RWPE1 (cell line): ENCODE measurements at regions of chr6 and their contacts with region 1.

Region 1: DNA sequence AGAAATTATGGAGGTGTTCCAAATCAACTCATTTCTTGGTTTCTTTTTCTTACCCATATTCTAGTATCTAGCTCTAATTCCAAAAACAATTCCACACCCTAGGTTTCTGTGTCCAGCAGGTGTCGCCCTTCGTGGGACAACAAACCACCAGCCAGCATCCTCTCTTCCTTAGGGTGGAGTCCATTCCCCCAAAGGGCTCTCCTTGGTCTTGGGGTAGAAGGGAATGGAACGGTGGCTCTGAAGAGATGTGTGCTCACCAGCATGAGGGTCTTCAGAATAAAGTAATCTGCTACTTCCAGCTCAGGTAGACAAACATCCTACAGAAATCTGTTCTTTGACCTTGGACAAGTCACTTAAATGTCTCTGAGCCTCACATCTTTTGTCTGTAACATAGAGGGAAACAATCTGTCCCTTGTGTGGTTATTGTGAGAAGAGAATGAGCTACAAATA is 7.2 kb downstream of the HLA-DMB start:
- DNase-seq: peak; percentile 73
- H3K27ac ChIP-seq: no peak overlapping the region
- CTCF ChIP-seq: peak; percentile 75

Region 2: DNA sequence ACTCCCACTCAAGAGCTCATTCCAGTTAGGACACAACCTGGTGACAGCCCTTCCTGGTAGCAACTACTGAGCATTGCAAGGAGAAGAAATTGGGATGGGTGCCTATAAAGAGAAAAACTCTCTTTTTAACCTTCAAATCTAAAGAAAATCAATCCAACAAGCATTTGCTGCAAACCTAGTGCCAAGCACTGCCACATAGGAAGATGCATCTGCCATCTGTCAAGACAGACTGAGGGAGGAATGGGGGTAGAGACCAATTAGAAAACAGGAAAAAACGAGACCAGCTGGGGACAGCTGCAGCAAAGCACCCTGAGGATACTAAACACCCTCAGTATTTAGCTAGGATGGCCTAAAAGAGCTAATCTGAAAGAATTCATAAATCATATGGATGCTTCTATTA is 20.7 kb before region 1 on chr6:
- CTCF ChIA-PET with region 1: interaction called, 12 read pairs
- POLR2A ChIA-PET with region 1: no interaction called
- DNase-seq: no peak
- H3K27ac ChIP-seq: no peak overlapping the region
- CTCF ChIP-seq: no peak

Region 3: GRCh38 chr6:32943864-32944649 is 10.4 kb after region 1 on chr6:
- CTCF ChIA-PET with region 1: interaction called, 11 read pairs
- POLR2A ChIA-PET with region 1: no interaction called
- DNase-seq: no peak
- H3K27ac ChIP-seq: no peak overlapping the region
- CTCF ChIP-seq: no peak

Region 4: DNA sequence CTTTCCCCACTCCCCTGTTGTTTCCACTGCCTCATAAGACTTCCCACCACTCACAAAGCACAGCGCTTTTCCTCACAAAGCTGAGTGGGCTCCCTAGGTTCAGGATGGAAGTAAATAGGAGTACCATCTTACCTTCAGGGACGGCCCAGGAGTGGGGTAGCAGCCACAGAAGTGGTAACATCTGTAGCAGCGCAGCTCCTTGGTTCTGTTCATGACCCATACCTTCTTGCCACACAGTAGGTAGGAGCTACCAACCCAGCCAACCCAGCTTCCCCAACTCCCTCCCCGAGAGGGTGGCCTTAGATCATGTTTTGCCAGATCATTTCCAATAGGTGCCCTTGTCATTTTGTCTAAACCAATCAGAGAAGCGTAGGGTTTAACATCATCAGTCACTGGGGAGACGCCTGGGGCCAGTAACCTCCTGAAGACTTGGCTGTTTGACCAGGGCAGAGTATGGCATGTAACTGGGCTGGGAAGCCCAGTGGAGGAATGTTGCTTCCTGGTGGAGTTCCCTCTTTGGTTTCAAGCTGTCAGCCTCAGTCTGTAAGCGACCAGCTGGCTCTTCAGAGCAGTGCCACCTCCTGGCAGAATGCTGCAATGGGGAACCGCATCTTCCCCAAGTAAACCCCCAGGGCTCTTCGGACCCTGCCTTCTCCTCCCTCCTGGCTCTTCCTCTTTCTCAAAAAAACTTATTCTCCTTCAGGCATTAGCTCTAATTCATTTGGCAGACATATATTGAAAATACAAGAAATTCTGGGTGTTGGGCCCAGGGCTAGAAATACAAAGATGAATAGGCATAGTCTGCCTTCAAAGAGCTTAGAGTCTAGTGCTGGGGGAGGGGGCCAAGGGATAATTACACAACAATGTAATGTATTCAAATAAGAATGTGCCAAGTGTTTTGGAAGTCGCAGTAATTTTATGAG is 19.4 kb after region 1 on chr6 and contains the start of gene HLA-DMA:
- CTCF ChIA-PET with region 1: interaction called, 13 read pairs
- POLR2A ChIA-PET with region 1: no interaction called
- DNase-seq: peak; percentile 82
- H3K27ac ChIP-seq: no peak within 1 kb of the TSS
- CTCF ChIP-seq: 0 out of 2 replicates have a peak, but pooled peaks have one; percentile 15

Region 5: DNA sequence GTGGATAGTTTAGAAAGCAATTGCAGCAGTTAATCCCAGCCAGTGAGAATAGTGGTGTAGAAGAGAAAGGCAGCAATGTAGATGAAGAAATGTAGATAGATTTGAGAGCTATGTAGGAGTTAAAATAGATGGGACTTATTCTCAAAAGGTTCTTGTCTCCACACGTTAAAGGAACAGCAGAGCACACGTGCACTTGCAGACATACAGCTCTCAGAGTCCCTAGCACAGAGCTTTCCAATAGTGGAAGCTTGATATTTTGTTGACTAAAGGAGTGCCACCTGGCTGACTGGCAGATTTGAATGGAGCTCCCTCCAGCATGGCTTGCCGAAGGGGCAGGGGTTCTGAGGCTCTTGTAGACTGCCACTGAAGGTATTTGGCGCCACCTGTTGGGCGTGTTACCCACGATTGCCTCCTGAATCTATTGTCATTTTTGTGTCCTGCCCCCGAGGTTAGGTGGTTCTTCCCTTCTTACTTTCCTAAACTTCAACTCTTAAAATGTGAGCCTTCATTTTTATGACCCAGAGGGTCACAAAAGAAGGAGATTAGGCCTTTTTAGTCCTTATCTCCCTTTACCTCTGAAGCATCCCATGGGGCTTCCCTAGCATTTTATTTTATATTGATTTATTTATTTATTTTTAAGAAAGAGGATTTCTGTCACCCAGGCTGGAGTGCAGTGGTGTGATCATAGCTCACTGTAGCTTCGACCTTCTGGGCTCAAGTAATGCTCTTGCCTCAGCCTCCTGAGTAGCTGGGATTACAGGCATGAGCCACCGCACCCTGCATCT is 51.1 kb after region 1 on chr6:
- CTCF ChIA-PET with region 1: interaction called, 21 read pairs
- POLR2A ChIA-PET with region 1: no interaction called
- DNase-seq: peak; percentile 71
- H3K27ac ChIP-seq: no peak overlapping the region
- CTCF ChIP-seq: peak; percentile 87

Region 6: GRCh38 chr6:33324125-33324524 is 390.5 kb after region 1 on chr6:
- CTCF ChIA-PET with region 1: no interaction called
- POLR2A ChIA-PET with region 1: no interaction called
- DNase-seq: no peak
- H3K27ac ChIP-seq: peak overlapping the region; percentile 95
- CTCF ChIP-seq: no peak